Esophagus muscularis mucosa (tissue), 4 donors: ENCODE measurements at regions of chr6 and their contacts with region 1.

Region 1: GRCh38 chr6:52577022-52577777 is at the start of gene TRAM2:
- DNase-seq: peak; percentile 95
- H3K4me3 ChIP-seq: peak within 1 kb of the TSS; percentile 88 to 92 (median 90)
- H3K27ac ChIP-seq: peak within 1 kb of the TSS; percentile 98 to 100 (median 99)
- H3K4me1 ChIP-seq: peaks cover 47 to 60% (median 54%) of the 10 kb centered on the region in 4 donors
- H3K27me3 ChIP-seq: no peaks in the 10 kb centered on the region
- CTCF ChIP-seq: peak in 2 of 3 experiments; percentile 7 to 32
- EP300 ChIP-seq: no peak
- POLR2A ChIP-seq: peak; percentile 49
- total RNA-seq, gene TRAM2: 13.3 to 23.8 (median 18.5) TPM

Region 2: GRCh38 chr6:52517502-52518278 is 59.5 kb before region 1 on chr6:
- intact Hi-C with region 1: loop called (anchors 2 kb)
- DNase-seq: peak; percentile 95
- H3K4me3 ChIP-seq: peak overlapping the region in 3 of 4 donors; percentile 6 to 16 (median 15)
- H3K27ac ChIP-seq: peak overlapping the region; percentile 79 to 89 (median 86)
- H3K4me1 ChIP-seq: peaks cover 60 to 96% (median 94%) of the 10 kb centered on the region in 4 donors
- H3K27me3 ChIP-seq: no peaks in the 10 kb centered on the region
- CTCF ChIP-seq: no peak
- EP300 ChIP-seq: no peak
- POLR2A ChIP-seq: no peak

Region 3: DNA sequence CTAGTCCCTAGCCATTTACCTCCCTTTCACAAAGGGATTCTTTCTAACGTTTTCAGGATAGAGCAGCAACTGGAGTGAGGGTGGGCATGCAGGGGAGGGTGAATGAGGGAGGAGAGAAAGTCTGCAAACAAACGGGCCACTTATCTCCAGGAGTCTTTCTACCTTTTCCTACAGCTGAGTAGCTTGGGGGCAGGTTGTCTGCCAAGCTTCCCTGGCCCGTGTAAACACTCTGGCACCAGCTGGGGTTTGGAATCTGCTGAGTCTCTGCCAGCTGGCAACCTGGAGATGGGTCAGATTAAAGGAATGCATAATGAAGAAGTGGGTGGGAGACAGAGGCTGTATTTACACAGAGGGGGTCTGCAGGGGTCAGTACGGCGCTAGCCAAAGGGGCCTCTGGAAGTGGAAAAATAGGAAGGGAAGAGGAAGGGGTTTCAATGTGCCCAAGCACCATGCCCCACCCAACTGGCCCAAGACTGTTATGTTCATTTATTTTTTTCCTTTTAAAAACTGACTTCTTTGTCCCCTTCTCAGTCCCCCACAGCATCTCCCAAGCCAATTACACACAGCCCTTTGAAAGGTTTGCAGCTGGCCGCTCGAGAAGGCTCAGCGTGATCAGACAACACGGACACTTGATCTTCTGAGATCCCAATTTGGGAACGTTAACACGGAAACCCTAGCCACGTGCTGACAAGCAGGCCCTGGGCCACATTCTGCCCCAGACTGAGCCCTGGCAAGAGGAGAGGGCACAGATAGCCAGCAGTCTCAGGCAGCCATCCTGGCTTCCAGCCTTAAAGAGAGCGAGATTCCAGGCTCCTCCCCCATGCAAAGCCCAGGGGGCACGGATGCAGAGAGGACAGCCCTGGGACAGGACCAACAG is 25.6 kb before region 1 on chr6:
- intact Hi-C with region 1: no loop called
- DNase-seq: no peak
- H3K4me3 ChIP-seq: peak overlapping the region; percentile 10 to 35 (median 16)
- H3K27ac ChIP-seq: peak overlapping the region; percentile 67 to 85 (median 78)
- H3K4me1 ChIP-seq: peaks cover 64 to 96% (median 90%) of the 10 kb centered on the region in 4 donors
- H3K27me3 ChIP-seq: no peaks in the 10 kb centered on the region
- CTCF ChIP-seq: no peak
- EP300 ChIP-seq: no peak
- POLR2A ChIP-seq: no peak